HepG2 (cell line): ENCODE measurements at regions of chr11 and their contacts with region 1.

Region 1: GRCh38 chr11:76207642-76208401 is 1.5 kb upstream of the WNT11 start:
- DNase-seq: peak; percentile 42
- ATAC-seq: peak; percentile 53
- H3K4me3 ChIP-seq: peak overlapping the region; percentile 61 to 75 (median 70)
- H3K27ac ChIP-seq: no peak overlapping the region
- H3K4me1 ChIP-seq: peaks cover 42% of the 10 kb centered on the region
- H3K27me3 ChIP-seq: peaks cover 14 to 27% of the 10 kb centered on the region in 2 experiments
- CTCF ChIP-seq: peak; percentile 85
- EP300 ChIP-seq: no peak
- POLR2A ChIP-seq: no peak
- RAD21 ChIP-seq: peak; percentile 95

Region 2: DNA sequence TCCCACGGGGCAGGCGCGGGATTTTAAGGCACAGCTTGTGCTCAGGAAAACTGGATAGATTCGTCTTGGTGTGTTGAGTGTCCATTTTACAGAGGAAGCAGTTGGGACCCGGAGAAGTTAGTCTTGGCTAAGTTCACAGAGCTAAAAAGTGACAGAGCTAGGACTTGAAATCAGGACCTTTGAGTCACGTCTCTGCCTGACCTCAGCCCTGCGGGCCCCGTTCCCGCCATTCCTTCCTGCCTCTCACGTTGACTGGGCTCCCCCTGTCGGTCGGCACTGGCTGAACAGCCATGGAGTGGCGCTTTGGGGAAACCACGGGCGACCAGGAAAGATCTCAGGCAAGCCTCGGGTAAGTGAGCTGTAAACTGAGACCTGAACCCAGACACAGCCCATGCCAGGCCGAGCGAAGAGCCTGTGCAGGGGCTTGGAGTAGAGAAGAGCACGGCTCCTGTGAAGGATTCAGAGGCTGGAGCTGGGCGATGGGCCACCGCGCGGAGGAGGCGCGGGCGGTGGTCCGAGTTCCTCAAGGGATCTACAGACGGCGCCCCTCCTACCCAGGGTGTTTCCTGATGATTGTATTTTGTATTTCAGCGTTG is 55.6 kb before region 1 on chr11:
- CTCF ChIA-PET with region 1: interaction called, 4 read pairs
- POLR2A ChIA-PET with region 1: no interaction called
- in situ Hi-C with region 1: loop called (anchors 10 kb)
- intact Hi-C with region 1: no loop called
- DNase-seq: peak; percentile 70
- ATAC-seq: peak; percentile 57
- H3K4me3 ChIP-seq: peak overlapping the region; percentile 28 to 68 (median 46); a peak in 5 of 6 replicates
- H3K27ac ChIP-seq: no peak overlapping the region
- H3K4me1 ChIP-seq: peaks cover 94% of the 10 kb centered on the region
- H3K27me3 ChIP-seq: no peaks in the 10 kb centered on the region
- CTCF ChIP-seq: peak; percentile 98
- EP300 ChIP-seq: no peak
- POLR2A ChIP-seq: no peak
- RAD21 ChIP-seq: peak; percentile 83

Region 3: GRCh38 chr11:76235233-76236091 is 27.6 kb after region 1 on chr11:
- CTCF ChIA-PET with region 1: interaction called, 8 read pairs
- POLR2A ChIA-PET with region 1: interaction called, 35 read pairs
- in situ Hi-C with region 1: no loop called
- intact Hi-C with region 1: loop called (anchors 1 kb)
- DNase-seq: peak; percentile 86
- ATAC-seq: peak; percentile 78
- H3K4me3 ChIP-seq: peak overlapping the region; percentile 82 to 90 (median 88)
- H3K27ac ChIP-seq: peak overlapping the region; percentile 48
- H3K4me1 ChIP-seq: peaks cover 69% of the 10 kb centered on the region
- H3K27me3 ChIP-seq: peaks cover 1 to 9% of the 10 kb centered on the region in 2 experiments; a peak in 3 of 5 replicates
- CTCF ChIP-seq: no peak; the same call in 1 of the 2 replicates
- EP300 ChIP-seq: no peak
- POLR2A ChIP-seq: peak; percentile 62 to 63; a peak in 3 of 4 replicates
- RAD21 ChIP-seq: no peak

Region 4: GRCh38 chr11:76318744-76319384 is 111.0 kb after region 1 on chr11:
- CTCF ChIA-PET with region 1: interaction called, 47 read pairs
- POLR2A ChIA-PET with region 1: no interaction called
- in situ Hi-C with region 1: loop called (anchors 5 kb)
- intact Hi-C with region 1: loop called (anchors 1 kb)
- DNase-seq: peak; percentile 64
- ATAC-seq: peak; percentile 92
- H3K4me3 ChIP-seq: no peak overlapping the region
- H3K27ac ChIP-seq: no peak overlapping the region
- H3K4me1 ChIP-seq: peaks cover 13% of the 10 kb centered on the region
- H3K27me3 ChIP-seq: peaks cover 3 to 10% of the 10 kb centered on the region in 2 experiments; a peak in 3 of 5 replicates
- CTCF ChIP-seq: peak; percentile 97
- EP300 ChIP-seq: no peak
- POLR2A ChIP-seq: no peak
- RAD21 ChIP-seq: peak; percentile 96

Region 5: DNA sequence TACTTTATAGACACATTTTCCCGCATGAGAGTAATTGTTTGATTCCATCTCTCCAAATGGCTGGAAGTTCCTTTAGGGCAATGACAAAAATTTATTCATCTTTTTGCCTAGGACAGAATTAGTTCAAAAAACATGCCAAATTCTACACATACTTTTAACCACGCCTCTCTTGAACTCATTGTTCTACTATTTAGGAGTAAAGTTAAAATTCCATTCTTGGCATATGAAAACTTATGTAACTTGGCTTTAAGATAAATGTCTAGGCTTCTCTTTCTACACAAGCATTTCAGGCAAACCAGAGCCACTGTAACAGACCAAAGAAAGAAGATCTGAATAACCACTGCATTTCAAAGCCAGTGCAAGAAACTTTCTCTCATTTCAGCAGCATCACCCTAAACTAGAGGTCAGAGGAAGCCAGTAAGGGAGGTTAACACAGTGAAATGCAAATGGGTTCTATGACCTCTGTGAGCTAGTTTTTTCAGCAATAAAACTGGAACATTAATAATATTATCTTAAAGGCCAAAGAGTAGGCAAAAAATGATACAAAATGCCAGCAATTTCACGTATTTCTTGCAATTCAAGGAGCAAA is 1539.7 kb after region 1 on chr11:
- CTCF ChIA-PET with region 1: no interaction called
- POLR2A ChIA-PET with region 1: no interaction called
- in situ Hi-C with region 1: no loop called
- intact Hi-C with region 1: no loop called
- DNase-seq: no peak
- ATAC-seq: no peak
- H3K4me3 ChIP-seq: no peak overlapping the region
- H3K27ac ChIP-seq: no peak overlapping the region
- H3K4me1 ChIP-seq: peaks cover 10% of the 10 kb centered on the region
- H3K27me3 ChIP-seq: no peaks in the 10 kb centered on the region; a peak in 1 of 5 replicates
- CTCF ChIP-seq: no peak
- EP300 ChIP-seq: no peak
- POLR2A ChIP-seq: no peak
- RAD21 ChIP-seq: no peak